ENCODE measurements at regions of chr7 and their contacts with region 1.

Region 1: GRCh38 chr7:22726345-22727185 is 435 bp upstream of the IL6 start:
- DNase-seq: peak in 1 of 2 experiments; percentile 62
- H3K4me3 ChIP-seq: peak overlapping the region in 1 of 4 experiments; percentile 22; a peak in 1 of 8 replicates
- H3K27ac ChIP-seq: no peak overlapping the region
- H3K4me1 ChIP-seq: peaks cover 4 to 9% (median 5%) of the 10 kb centered on the region in 4 experiments
- H3K27me3 ChIP-seq: peaks cover 0 to 3% (median 0%) of the 10 kb centered on the region in 4 experiments; a peak in 2 of 7 replicates
- CTCF ChIP-seq: peak; percentile 66 to 89 (median 85)
- EP300 ChIP-seq: no peak
- POLR2A ChIP-seq: no peak
- RAD21 ChIP-seq: peak; percentile 85 to 90

Region 2: DNA sequence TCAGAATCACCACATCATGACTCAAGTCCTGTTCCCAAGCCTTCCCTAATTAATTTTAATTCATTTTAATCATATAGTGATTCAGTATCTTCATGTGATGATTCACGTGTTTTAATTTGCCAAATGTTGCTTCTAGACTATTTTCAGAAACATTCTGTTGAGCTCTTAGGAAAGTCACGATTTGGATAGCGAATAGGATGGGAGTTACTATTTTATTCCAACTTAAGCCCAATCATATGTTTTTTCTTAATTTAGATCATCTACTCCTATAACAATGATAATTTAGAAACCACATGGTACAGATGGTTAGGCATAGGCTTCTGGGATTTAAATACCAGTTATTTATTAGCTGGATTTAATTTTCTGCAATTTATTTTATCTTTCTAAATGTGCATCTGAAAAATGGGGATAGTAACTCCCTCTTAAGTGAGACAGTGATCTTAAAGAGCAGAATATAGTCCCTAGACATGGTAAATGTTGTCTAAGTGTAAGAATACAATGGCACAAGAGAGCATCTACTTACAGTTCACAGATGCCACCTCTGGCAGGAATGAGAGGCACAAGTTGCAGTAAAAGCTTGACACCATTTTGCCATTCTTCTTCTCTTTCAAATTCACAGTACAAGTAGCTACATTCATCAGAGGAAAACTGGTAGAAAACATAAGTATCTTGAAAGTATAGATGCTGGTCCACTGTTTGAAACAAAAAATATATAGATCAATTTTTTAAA is 418.6 kb before region 1 on chr7:
- CTCF ChIA-PET with region 1: no interaction called
- POLR2A ChIA-PET with region 1: no interaction called
- DNase-seq: no peak
- H3K4me3 ChIP-seq: no peak overlapping the region
- H3K27ac ChIP-seq: no peak overlapping the region
- H3K4me1 ChIP-seq: peaks cover 0 to under 1% (median 0%) of the 10 kb centered on the region in 4 experiments; a peak in 1 of 7 replicates
- H3K27me3 ChIP-seq: peaks cover 0 to 1% (median 0%) of the 10 kb centered on the region in 4 experiments; a peak in 1 of 7 replicates
- CTCF ChIP-seq: peak in 1 of 3 experiments; percentile 39; a peak in 2 of 4 replicates
- EP300 ChIP-seq: no peak
- POLR2A ChIP-seq: no peak
- RAD21 ChIP-seq: peak; percentile 27 to 34; a peak in 3 of 4 replicates

Region 3: GRCh38 chr7:22469371-22470143 is 257.0 kb before region 1 on chr7:
- CTCF ChIA-PET with region 1: no interaction called
- POLR2A ChIA-PET with region 1: no interaction called
- DNase-seq: no peak
- H3K4me3 ChIP-seq: no peak overlapping the region
- H3K27ac ChIP-seq: no peak overlapping the region
- H3K4me1 ChIP-seq: no peaks in the 10 kb centered on the region
- H3K27me3 ChIP-seq: no peaks in the 10 kb centered on the region
- CTCF ChIP-seq: no peak
- EP300 ChIP-seq: no peak
- POLR2A ChIP-seq: no peak
- RAD21 ChIP-seq: no peak

Region 4: DNA sequence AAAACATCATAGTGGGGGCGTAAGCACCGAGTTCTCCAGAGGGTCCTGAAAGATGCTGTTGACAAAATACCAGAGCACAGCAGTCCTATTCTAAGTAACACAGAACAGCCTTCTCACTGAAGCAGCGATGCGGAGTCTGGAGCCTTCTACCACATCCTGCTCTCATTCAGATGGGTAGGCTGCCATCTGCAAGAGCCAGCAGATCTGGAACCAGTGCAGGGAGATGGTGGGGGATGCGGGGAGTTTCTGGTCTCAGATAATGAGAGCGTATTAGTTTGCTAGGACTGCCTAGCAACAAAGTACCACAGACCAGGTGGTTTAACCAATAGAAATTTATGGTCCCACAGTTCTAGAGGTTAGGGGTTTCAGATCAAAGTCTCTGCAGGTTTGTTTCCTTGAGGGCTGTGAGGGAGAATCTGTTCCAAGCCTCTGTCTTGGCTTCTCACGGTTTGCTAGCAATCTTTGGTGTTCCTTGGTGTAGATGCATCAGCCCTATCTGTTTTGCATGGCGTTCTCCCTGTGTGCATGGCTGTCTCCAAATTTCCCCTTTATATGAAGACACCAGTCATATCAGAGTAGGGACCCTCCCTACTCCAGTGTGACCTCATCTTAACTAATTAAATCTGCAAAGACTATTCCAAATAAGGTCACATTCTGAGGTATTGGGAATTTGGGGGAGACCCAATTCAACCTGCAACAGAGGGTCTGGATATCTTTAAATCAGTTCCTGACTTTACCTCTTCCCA is 174.6 kb before region 1 on chr7:
- CTCF ChIA-PET with region 1: interaction called, 50 read pairs
- POLR2A ChIA-PET with region 1: interaction called, 4 read pairs
- DNase-seq: peak in 1 of 2 experiments; percentile 39
- H3K4me3 ChIP-seq: no peak overlapping the region
- H3K27ac ChIP-seq: no peak overlapping the region
- H3K4me1 ChIP-seq: peaks cover 0 to 7% (median 4%) of the 10 kb centered on the region in 4 experiments; a peak in 4 of 7 replicates
- H3K27me3 ChIP-seq: no peaks in the 10 kb centered on the region
- CTCF ChIP-seq: no peak
- EP300 ChIP-seq: no peak
- POLR2A ChIP-seq: no peak
- RAD21 ChIP-seq: no peak

Region 5: GRCh38 chr7:22586786-22587140 is 139.8 kb before region 1 on chr7:
- CTCF ChIA-PET with region 1: interaction called, 145 read pairs
- POLR2A ChIA-PET with region 1: interaction called, 3 read pairs
- DNase-seq: no peak
- H3K4me3 ChIP-seq: no peak overlapping the region
- H3K27ac ChIP-seq: no peak overlapping the region
- H3K4me1 ChIP-seq: peaks cover 4 to 22% (median 13%) of the 10 kb centered on the region in 4 experiments; a peak in 6 of 7 replicates
- H3K27me3 ChIP-seq: no peaks in the 10 kb centered on the region
- CTCF ChIP-seq: peak; percentile 10 to 64 (median 52)
- EP300 ChIP-seq: 0 out of 3 replicates have a peak, but pooled peaks of 1 of the 2 experiments have one; percentile 31
- POLR2A ChIP-seq: no peak
- RAD21 ChIP-seq: peak; percentile 43 to 55; a peak in 3 of 4 replicates

Region 6: GRCh38 chr7:22660732-22661131 is 65.8 kb before region 1 on chr7:
- CTCF ChIA-PET with region 1: interaction called, 55 read pairs
- POLR2A ChIA-PET with region 1: no interaction called
- DNase-seq: no peak
- H3K4me3 ChIP-seq: no peak overlapping the region
- H3K27ac ChIP-seq: no peak overlapping the region
- H3K4me1 ChIP-seq: peaks cover 0 to 3% (median 0%) of the 10 kb centered on the region in 4 experiments; a peak in 1 of 7 replicates
- H3K27me3 ChIP-seq: no peaks in the 10 kb centered on the region
- CTCF ChIP-seq: peak; percentile 74 to 90 (median 86)
- EP300 ChIP-seq: no peak
- POLR2A ChIP-seq: no peak
- RAD21 ChIP-seq: peak; percentile 40 to 66

Region 7: GRCh38 chr7:22677680-22678079 is 48.9 kb before region 1 on chr7:
- CTCF ChIA-PET with region 1: interaction called, 18 read pairs
- POLR2A ChIA-PET with region 1: no interaction called
- DNase-seq: no peak
- H3K4me3 ChIP-seq: no peak overlapping the region
- H3K27ac ChIP-seq: no peak overlapping the region
- H3K4me1 ChIP-seq: no peaks in the 10 kb centered on the region; a peak in 1 of 7 replicates
- H3K27me3 ChIP-seq: no peaks in the 10 kb centered on the region
- CTCF ChIP-seq: no peak
- EP300 ChIP-seq: no peak
- POLR2A ChIP-seq: no peak
- RAD21 ChIP-seq: no peak

Region 8: DNA sequence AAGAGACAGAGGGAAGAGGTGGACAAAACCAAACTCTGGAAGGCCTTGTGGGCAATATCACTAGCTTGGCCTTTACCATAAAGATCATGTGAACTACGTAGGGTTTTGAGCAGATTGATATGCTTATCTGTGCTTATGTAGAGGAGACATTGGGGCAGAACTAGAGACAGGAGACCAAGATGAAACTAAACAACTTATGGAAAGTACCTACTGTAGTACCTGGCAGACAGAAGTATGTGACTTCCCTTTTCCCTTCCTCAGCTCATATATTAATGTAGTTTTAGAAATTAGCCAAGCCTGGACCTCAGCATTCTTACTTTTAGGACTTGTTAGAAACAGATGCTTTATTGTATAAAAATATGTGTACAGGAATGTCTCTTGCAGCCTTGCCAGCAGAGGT is 13.6 kb before region 1 on chr7:
- CTCF ChIA-PET with region 1: interaction called, 56 read pairs
- POLR2A ChIA-PET with region 1: interaction called, 10 read pairs
- DNase-seq: no peak
- H3K4me3 ChIP-seq: no peak overlapping the region
- H3K27ac ChIP-seq: no peak overlapping the region
- H3K4me1 ChIP-seq: peaks cover 4 to 9% (median 5%) of the 10 kb centered on the region in 4 experiments; a peak in 6 of 7 replicates
- H3K27me3 ChIP-seq: no peaks in the 10 kb centered on the region
- CTCF ChIP-seq: no peak
- EP300 ChIP-seq: no peak
- POLR2A ChIP-seq: no peak
- RAD21 ChIP-seq: no peak

Measured in H1 (cell line).